MCF 10A (cell line): ENCODE measurements at regions of chr4 and their contacts with region 1.

Region 1: DNA sequence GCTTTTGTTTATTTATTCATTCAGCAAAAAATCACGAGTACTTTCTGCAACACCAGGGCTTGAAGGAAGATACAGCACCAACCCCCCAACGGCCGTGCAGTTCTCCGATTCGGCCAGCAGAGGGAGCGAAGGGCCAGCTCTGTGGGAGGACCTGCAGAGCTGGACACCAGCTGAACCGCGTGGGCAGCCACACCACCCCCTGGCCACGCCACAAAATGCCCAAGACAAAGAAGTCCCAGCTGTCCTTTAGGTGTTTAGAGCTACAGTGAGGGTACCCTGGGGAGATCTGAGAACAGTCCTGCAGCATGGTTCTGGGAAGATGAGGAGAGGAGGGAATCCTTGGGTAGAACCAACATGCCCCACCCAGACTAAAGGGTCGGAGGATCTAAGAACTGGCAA is 83.1 kb downstream of the RELL1 start:
- DNase-seq: peak; percentile 76
- H3K4me3 Mint-ChIP-seq: no peak overlapping the region
- H3K27ac Mint-ChIP-seq: no peak overlapping the region
- H3K4me1 Mint-ChIP-seq: peaks cover 23% of the 10 kb centered on the region
- H3K27me3 Mint-ChIP-seq: no peaks in the 10 kb centered on the region
- CTCF ChIP-seq: peak; percentile 94

Region 2: GRCh38 chr4:37590016-37590415 is 13.1 kb before region 1 on chr4:
- CTCF ChIA-PET with region 1: interaction called, 15 read pairs
- POLR2A ChIA-PET with region 1: no interaction called
- intact Hi-C with region 1: no loop called
- DNase-seq: no peak
- H3K4me3 Mint-ChIP-seq: no peak overlapping the region
- H3K27ac Mint-ChIP-seq: no peak overlapping the region
- H3K4me1 Mint-ChIP-seq: no peaks in the 10 kb centered on the region
- H3K27me3 Mint-ChIP-seq: no peaks in the 10 kb centered on the region
- CTCF ChIP-seq: no peak

Region 3: DNA sequence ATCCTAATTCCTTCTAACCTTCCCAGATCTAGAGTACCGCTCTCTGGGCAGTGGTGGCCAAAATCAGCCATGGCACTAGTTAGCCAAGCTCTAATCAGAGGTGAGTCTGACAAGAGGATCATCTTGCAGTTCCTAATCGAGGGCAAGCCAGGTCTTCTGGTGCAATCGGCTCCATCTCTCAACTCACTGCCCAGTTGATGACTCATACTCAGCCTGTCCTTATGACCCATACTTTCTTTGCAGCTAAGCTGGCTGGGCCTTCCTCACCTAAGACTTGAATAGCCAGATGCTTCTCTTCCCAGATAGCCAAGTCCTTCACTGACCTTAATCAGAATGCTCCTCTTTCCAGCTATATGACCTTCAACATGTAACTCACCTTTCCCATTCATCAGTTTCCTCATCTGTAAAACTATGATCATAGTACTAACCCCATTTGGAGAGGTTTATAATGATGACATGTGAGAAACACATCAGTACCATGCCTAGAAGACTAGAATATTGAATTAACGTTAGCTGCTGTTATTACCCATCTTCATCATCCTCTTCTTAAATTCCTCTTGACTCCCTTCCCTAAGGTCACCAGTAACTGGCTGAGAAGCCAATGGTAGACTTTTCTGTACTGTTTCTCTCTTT is 26.0 kb after region 1 on chr4:
- CTCF ChIA-PET with region 1: interaction called, 10 read pairs
- POLR2A ChIA-PET with region 1: no interaction called
- intact Hi-C with region 1: no loop called
- DNase-seq: peak; percentile 86
- H3K4me3 Mint-ChIP-seq: no peak overlapping the region
- H3K27ac Mint-ChIP-seq: no peak overlapping the region
- H3K4me1 Mint-ChIP-seq: peaks cover 17% of the 10 kb centered on the region
- H3K27me3 Mint-ChIP-seq: no peaks in the 10 kb centered on the region
- CTCF ChIP-seq: no peak

Region 4: DNA sequence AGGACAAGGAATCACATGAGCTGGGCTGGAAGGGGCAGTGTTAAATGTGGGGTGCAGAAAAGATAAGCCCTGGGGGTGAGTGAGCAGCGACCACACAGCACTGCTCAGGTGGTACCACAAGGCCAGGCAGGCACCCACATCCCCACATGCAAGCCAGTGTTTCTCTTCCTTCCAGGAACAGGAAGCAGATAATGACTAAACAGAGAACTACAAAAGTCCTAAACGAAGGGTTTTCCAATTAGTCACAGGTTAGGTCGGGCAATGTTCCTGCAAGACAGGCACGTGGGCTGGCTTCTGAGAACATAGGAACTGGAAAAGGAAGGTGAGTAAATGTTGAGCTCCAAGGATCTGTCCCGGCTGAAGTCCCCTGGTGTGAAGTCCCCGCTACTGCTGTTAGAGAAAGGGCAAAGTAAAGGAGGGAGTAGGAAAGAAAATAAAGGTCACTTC is 63.6 kb after region 1 on chr4:
- CTCF ChIA-PET with region 1: interaction called, 10 read pairs
- POLR2A ChIA-PET with region 1: interaction called, 4 read pairs
- intact Hi-C with region 1: loop called (anchors 5 kb)
- DNase-seq: peak; percentile 95
- H3K4me3 Mint-ChIP-seq: peak overlapping the region; percentile 63
- H3K27ac Mint-ChIP-seq: peak overlapping the region; percentile 97
- H3K4me1 Mint-ChIP-seq: peaks cover 37% of the 10 kb centered on the region
- H3K27me3 Mint-ChIP-seq: no peaks in the 10 kb centered on the region
- CTCF ChIP-seq: no peak

Region 5: DNA sequence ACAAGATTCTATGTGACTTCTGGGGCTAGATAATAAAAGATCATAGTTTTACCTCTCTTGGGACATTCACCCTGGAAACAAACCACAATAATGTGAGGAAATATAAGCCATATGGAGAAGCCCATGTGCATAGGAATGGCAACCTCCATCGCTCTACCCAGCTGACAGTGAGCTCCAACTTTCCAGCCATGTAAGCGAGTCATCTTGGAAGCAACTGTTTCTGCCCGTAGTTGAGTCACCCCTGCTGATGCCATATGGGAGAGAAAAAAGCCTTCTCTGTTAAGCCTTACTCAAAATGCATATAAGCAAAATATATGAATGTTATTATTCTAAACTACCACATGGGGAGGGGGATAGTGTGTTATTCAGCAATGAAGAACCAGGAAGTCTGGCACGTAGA is 114.5 kb after region 1 on chr4:
- CTCF ChIA-PET with region 1: interaction called, 12 read pairs
- POLR2A ChIA-PET with region 1: no interaction called
- intact Hi-C with region 1: no loop called
- DNase-seq: peak; percentile 51
- H3K4me3 Mint-ChIP-seq: no peak overlapping the region
- H3K27ac Mint-ChIP-seq: no peak overlapping the region
- H3K4me1 Mint-ChIP-seq: peaks cover 27% of the 10 kb centered on the region
- H3K27me3 Mint-ChIP-seq: no peaks in the 10 kb centered on the region
- CTCF ChIP-seq: no peak

Region 6: GRCh38 chr4:37802068-37802666 is 199.1 kb after region 1 on chr4:
- CTCF ChIA-PET with region 1: interaction called, 110 read pairs
- POLR2A ChIA-PET with region 1: interaction called, 4 read pairs
- intact Hi-C with region 1: loop called (anchors 1 kb)
- DNase-seq: peak; percentile 87
- H3K4me3 Mint-ChIP-seq: no peak overlapping the region
- H3K27ac Mint-ChIP-seq: no peak overlapping the region
- H3K4me1 Mint-ChIP-seq: peaks cover 10% of the 10 kb centered on the region
- H3K27me3 Mint-ChIP-seq: no peaks in the 10 kb centered on the region
- CTCF ChIP-seq: peak; percentile 53